ENCODE measurements at regions of chr17 and their contacts with region 1.

Region 1: GRCh38 chr17:28180449-28180848 is 138.0 kb downstream of the NLK start:
- DNase-seq: no peak
- H3K4me3 ChIP-seq: no peak overlapping the region
- H3K27ac ChIP-seq: peak overlapping the region in 4 of 59 donors; percentile 7 to 49 (median 8)
- H3K27me3 ChIP-seq: no peaks in the 10 kb centered on the region
- CTCF ChIP-seq: no peak

Region 2: DNA sequence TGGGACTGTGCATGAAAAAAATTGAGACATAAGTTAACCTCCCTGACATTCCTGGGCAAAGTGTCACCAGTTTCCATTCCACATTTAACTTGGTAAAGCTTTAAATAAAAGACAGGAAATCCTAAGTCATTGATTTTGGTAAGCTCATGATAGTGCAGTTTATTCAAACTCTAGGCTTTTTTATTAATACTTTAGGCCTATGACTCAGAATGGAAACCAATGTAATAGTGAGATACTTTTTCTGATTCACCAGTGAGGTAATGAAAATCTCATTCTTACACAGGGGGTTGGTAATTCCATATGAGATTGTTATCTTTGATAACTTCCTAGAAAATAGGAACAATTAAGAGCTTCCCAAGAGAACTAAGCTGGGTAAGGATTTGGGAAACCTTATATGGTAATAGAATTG is 46.9 kb before region 1 on chr17:
- intact Hi-C with region 1: loop called in 1 of 2 experiments (anchors 10 kb)
- DNase-seq: no peak
- H3K4me3 ChIP-seq: no peak overlapping the region
- H3K27ac ChIP-seq: peak overlapping the region in 2 of 59 donors; percentile 7 to 23
- H3K27me3 ChIP-seq: no peaks in the 10 kb centered on the region
- CTCF ChIP-seq: no peak

Region 3: DNA sequence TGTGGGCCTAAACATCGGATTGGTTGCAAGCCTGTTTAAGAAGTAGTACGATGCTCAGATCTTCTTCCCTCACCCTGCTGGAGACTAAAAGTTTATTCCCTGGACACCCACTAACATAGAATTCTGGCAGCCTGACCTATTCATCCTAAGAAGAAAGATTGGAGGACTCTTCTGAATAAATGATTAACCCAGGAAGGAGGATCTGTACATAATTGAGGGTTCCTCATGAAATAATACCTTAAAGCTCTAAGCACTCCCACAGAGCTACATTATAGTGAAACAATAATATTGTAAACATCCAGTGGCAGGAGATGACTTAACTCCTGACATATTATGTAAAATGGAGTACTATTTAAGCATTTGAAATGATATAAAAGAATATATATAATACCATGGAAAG is 26.2 kb before region 1 on chr17:
- intact Hi-C with region 1: no loop called
- DNase-seq: no peak
- H3K4me3 ChIP-seq: no peak overlapping the region
- H3K27ac ChIP-seq: peak overlapping the region in 1 of 59 donors; percentile 3
- H3K27me3 ChIP-seq: no peaks in the 10 kb centered on the region
- CTCF ChIP-seq: no peak